Spleen (tissue), 13 donors: ENCODE measurements at regions of chr1 and their contacts with region 1.

Region 1: DNA sequence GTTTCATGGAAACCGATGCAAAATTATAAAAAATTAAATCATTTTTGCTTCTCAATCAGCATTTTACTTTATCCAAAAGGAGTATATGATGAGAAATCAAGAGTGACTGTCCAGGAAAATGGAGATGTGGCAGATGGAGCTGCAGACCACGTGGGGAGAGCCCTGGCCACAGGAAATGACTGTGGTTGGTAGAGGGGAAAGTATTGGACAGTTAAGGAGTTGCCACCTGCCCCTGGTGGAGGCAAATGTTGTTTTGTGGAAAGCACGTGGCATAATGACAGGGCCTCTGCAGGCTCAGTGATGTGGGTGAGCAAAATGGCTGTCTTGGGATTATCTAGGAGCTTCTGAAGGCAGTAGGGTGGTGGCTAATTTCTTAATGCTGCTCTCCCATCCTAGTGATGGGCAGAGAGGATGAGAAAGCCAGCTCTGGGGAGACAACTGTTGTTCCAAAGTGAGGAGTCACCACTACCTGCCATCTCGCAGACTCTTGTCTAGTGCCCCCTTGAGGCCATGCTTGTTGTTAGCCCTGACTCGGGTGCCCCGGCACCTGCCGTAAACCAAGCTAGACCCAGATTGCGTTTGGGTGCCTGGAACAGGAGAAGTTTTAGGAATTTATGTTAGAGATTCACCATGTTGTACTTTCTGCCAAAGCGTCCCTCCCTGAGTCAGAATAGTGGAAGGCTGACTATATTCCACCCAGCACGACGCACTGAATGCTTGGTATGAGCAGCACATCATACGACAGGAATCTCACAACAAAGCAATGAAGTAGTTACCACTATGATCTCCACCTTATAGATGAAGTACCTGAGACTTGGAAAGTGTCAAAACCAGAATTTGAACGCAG is 144.0 kb downstream of the ROR1 start:
- DNase-seq: no peak
- H3K4me3 ChIP-seq: no peak overlapping the region
- H3K27ac ChIP-seq: no peak overlapping the region
- H3K4me1 ChIP-seq: peaks cover 0 to 15% (median 0%) of the 10 kb centered on the region in 6 donors
- H3K27me3 ChIP-seq: no peaks in the 10 kb centered on the region
- CTCF ChIP-seq: peak in 1 of 11 experiments; percentile 26
- POLR2A ChIP-seq: no peak

Region 2: GRCh38 chr1:63691701-63692425 is 225.9 kb before region 1 on chr1:
- intact Hi-C with region 1: loop called (anchors 10 kb)
- DNase-seq: no peak
- H3K4me3 ChIP-seq: no peak overlapping the region
- H3K27ac ChIP-seq: no peak overlapping the region
- H3K4me1 ChIP-seq: peaks cover 0 to 14% (median 4%) of the 10 kb centered on the region in 6 donors
- H3K27me3 ChIP-seq: no peaks in the 10 kb centered on the region
- CTCF ChIP-seq: peak; percentile 23 to 77 (median 67)
- POLR2A ChIP-seq: no peak

Region 3: DNA sequence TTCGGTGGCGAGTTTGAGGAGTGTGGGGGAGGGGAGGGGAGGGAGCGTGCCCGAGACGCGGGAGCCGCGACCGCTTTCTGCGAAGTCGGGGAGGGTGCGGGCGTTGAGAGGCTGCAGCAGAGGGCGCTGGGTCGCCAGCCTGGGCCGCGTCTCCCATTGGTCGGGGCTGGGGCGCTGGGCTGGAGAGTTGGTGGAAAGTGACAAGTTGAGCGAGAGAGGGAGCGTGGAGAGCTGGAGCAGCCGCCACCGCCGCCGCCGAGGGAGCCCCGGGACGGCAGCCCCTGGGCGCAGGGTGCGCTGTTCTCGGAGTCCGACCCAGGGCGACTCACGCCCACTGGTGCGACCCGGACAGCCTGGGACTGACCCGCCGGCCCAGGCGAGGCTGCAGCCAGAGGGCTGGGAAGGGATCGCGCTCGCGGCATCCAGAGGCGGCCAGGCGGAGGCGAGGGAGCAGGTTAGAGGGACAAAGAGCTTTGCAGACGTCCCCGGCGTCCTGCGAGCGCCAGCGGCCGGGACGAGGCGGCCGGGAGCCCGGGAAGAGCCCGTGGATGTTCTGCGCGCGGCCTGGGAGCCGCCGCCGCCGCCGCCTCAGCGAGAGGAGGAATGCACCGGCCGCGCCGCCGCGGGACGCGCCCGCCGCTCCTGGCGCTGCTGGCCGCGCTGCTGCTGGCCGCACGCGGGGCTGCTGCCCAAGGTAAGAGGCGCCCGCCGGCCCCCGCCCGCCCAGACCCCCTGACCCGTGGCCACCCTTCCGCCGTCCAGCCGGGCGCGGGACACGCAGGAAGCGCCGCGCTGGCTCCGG is 143.8 kb before region 1 on chr1 and contains the start of gene ROR1:
- intact Hi-C with region 1: loop called (anchors 10 kb)
- DNase-seq: peak; percentile 92
- H3K4me3 ChIP-seq: peak within 1 kb of the TSS; percentile 58 to 84 (median 64)
- H3K27ac ChIP-seq: peak within 1 kb of the TSS; percentile 53 to 86 (median 82)
- H3K4me1 ChIP-seq: peaks cover 0 to 37% (median 27%) of the 10 kb centered on the region in 6 donors
- H3K27me3 ChIP-seq: peaks cover 0 to 62% (median 26%) of the 10 kb centered on the region in 7 donors
- CTCF ChIP-seq: peak in 10 of 11 experiments; percentile 31 to 81 (median 70)
- POLR2A ChIP-seq: no peak
- total RNA-seq, gene ROR1: 4.6 to 12.3 (median 8.2) TPM

Region 4: GRCh38 chr1:64121766-64122385 is 204.1 kb after region 1 on chr1:
- intact Hi-C with region 1: no loop called
- DNase-seq: no peak
- H3K4me3 ChIP-seq: no peak overlapping the region
- H3K27ac ChIP-seq: no peak overlapping the region
- H3K4me1 ChIP-seq: no peaks in the 10 kb centered on the region
- H3K27me3 ChIP-seq: no peaks in the 10 kb centered on the region
- CTCF ChIP-seq: no peak
- POLR2A ChIP-seq: no peak